ENCODE measurements at regions of chr22 and their contacts with region 1.

Region 1: DNA sequence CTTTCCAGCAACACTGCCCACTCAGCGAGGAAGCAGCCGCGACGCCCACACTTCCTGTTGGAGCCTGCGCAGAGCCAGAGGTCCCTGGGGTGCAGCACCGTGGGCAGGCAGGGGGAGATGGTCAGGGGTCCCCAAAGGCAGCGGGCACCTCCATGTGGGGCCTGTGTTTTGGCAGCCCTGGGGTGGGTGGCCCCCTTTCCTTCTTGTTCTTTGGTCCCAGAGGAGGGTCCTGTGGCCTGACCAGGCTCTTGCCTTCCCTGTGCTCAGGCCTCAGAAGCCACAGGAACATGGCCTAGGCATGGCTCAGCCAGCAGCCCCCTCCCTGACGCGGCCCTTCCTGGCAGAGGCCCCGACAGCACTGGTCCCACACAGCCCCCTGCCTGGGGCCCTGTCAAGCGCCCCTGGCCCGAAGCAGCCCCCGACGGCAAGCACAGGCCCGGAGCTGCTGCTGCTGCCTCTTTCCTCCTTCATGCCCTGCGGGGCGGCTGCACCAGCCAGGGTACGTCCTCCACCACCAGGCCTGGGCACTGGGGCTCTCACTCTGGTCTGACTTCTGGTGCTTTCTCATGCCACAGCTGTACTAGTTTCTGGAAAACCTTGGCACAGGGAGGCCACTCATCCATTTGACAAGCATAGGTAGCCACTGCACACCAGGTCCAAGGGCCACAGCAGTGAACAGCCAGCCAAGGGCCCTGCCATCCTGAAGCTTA is 47.1 kb downstream of the PISD start:
- DNase-seq: no peak
- ATAC-seq: no peak
- H3K4me3 ChIP-seq: no peak overlapping the region
- H3K27ac ChIP-seq: no peak overlapping the region
- H3K4me1 ChIP-seq: peaks cover 10% of the 10 kb centered on the region
- H3K27me3 ChIP-seq: no peaks in the 10 kb centered on the region
- CTCF ChIP-seq: no peak
- POLR2A ChIP-seq: no peak
- RAD21 ChIP-seq: no peak

Region 2: GRCh38 chr22:30408414-30409104 is 1206.4 kb before region 1 on chr22:
- CTCF ChIA-PET with region 1: no interaction called
- POLR2A ChIA-PET with region 1: no interaction called
- dilution Hi-C with region 1: no loop called
- in situ Hi-C with region 1: no loop called
- intact Hi-C with region 1: no loop called
- DNase-seq: peak; percentile 65
- ATAC-seq: peak; percentile 88
- H3K4me3 ChIP-seq: no peak overlapping the region
- H3K27ac ChIP-seq: no peak overlapping the region; the same call in 1 of the 2 replicates
- H3K4me1 ChIP-seq: peaks cover 2% of the 10 kb centered on the region
- H3K27me3 ChIP-seq: no peaks in the 10 kb centered on the region
- CTCF ChIP-seq: no peak
- POLR2A ChIP-seq: no peak
- RAD21 ChIP-seq: no peak

Region 3: DNA sequence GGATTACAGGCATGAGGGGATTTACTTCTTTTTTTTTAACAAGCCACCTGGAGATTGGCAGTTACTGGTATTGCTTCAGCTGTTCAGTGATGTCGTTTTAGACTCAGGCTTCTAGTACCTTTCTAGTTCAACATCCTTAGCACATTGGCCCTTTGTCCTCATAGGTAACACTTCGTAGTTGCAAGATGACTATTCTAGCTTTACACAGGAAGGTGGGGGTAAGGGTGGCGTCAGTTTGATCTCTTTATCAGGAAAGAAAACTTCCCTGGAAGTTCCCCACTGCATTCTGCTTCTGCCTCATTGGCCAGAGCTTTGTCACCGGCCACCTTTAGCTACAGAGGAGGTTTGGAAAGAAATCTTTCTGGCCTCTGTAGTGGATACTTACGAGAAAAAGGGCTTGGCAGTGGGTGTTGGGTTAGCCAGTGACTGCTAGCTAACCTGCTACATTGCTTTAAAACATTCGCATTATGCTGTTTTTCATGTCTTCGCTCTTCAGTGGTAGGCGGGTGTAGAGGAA is 77.9 kb before region 1 on chr22:
- CTCF ChIA-PET with region 1: no interaction called
- POLR2A ChIA-PET with region 1: interaction called, 16 read pairs
- dilution Hi-C with region 1: no loop called
- in situ Hi-C with region 1: no loop called
- intact Hi-C with region 1: no loop called
- DNase-seq: no peak
- ATAC-seq: no peak
- H3K4me3 ChIP-seq: no peak overlapping the region
- H3K27ac ChIP-seq: no peak overlapping the region
- H3K4me1 ChIP-seq: peaks cover 5% of the 10 kb centered on the region; the same call in 1 of the 2 replicates
- H3K27me3 ChIP-seq: no peaks in the 10 kb centered on the region
- CTCF ChIP-seq: no peak
- POLR2A ChIP-seq: no peak
- RAD21 ChIP-seq: no peak

Region 4: GRCh38 chr22:31630331-31631329 is 15.7 kb after region 1 on chr22:
- CTCF ChIA-PET with region 1: no interaction called
- POLR2A ChIA-PET with region 1: no interaction called
- dilution Hi-C with region 1: no loop called
- in situ Hi-C with region 1: no loop called
- intact Hi-C with region 1: no loop called
- DNase-seq: peak; percentile 74
- ATAC-seq: peak; percentile 92
- H3K4me3 ChIP-seq: peak overlapping the region; percentile 69
- H3K27ac ChIP-seq: peak overlapping the region; percentile 78
- H3K4me1 ChIP-seq: peaks cover 25% of the 10 kb centered on the region
- H3K27me3 ChIP-seq: no peaks in the 10 kb centered on the region
- CTCF ChIP-seq: no peak
- POLR2A ChIP-seq: peak; percentile 81
- RAD21 ChIP-seq: no peak